Breast epithelium (tissue), 4 donors: ENCODE measurements at regions of chr16 and their contacts with region 1.

Region 1: DNA sequence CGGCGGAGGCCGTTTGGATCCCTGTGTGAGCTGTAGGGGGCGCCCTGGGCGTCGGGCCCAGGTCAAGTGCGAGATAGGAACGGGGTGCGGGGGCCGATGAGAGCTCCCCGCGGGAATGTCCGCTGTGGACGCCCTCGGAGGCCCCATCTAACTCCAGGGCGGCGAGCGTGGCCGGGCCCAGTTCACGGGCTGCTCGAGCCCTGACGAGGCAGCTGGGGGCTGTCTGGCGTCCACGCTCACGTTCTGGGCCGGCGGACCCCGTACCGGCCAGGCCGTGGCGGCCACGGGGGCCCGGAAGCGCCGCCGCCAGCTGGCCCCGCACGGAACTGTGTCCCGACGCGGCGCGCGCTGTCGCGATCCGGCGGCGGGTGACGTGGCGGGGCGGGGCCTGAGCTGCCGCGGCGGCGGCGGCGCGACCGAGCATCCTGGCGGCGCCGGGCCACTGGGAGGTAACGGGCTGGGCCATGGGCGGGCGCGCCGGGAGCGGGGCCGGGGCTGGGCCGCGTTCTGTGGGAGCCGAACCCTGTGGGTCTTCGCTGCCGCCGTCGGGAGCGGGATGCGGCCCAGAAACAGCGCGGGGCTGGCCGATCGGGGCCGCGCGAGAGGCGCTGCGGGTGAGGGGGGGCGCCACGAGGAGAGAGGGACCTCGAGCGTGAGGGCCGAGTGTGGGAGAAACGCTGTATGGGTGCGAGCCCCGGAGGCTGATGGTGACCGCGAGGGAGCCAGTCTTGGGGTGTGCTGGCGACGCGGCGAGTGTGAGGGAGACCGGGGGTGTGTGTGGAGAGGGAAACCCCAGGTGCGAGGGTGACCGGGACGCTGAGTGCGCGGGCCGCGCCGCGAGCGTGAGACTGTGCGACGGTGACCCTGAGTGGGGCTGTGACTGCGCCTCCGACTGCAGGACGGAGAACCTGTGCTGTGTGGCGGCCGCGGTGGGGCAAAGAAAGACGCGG is at the start of gene SLC7A6:
- DNase-seq: peak; percentile 42 to 60
- H3K4me3 ChIP-seq: peak within 1 kb of the TSS; percentile 76 to 91 (median 86)
- H3K27ac ChIP-seq: peak within 1 kb of the TSS; percentile 88 to 97
- H3K4me1 ChIP-seq: no peaks in the 10 kb centered on the region
- H3K27me3 ChIP-seq: no peaks in the 10 kb centered on the region
- CTCF ChIP-seq: peak; percentile 42 to 64 (median 58)
- POLR2A ChIP-seq: no peak
- total RNA-seq, gene SLC7A6: 43.2 to 284 (median 65.2) TPM

Region 2: DNA sequence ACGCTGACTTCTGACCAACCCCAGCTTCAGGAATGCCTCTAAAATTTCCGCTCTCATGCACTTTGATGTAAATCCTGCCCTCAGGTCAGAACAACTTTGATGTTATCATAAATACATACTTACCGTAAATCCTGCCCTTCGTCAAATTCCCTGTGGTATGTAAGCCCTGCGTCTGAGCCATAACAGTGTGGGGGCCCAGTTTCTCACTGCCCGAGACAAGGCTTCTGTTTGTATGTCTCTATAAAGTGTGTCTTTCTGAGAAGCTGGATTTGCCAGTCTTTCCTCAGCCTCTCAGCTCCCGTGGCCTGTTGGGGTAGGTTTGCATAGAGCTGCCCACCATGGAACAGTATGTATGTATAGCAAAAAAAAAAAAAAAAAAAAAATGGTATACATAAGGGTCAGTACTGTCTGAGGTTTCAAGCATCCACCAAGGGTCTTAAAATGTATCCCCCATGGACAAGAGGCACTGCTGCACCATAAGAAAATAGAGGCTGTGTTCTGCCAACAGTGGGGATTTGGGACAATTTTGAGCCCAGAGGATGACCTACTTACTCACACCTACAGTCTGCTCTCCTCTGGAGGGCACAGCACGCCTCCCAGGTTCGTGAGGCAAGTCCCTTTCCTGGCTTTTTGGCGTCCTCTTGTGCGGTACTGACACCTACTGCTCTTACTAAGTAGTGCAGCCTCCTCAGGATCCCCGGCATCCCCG is 63.9 kb after region 1 on chr16:
- intact Hi-C with region 1: loop called (anchors 5 kb)
- DNase-seq: peak; percentile 73 to 77
- H3K4me3 ChIP-seq: no peak overlapping the region
- H3K27ac ChIP-seq: no peak overlapping the region
- H3K4me1 ChIP-seq: peaks cover 0 to 4% of the 10 kb centered on the region in 2 donors
- H3K27me3 ChIP-seq: no peaks in the 10 kb centered on the region
- CTCF ChIP-seq: peak; percentile 76 to 97 (median 94)
- POLR2A ChIP-seq: no peak